ENCODE measurements at regions of chr9 and their contacts with region 1.

Region 1: GRCh38 chr9:129131300-129132145 is 20.3 kb downstream of the PTPA start:
- DNase-seq: peak; percentile 91
- H3K4me3 ChIP-seq: no peak overlapping the region
- H3K27ac ChIP-seq: no peak overlapping the region
- H3K4me1 ChIP-seq: peaks cover 0 to 11% of the 10 kb centered on the region in 2 experiments; a peak in 1 of 4 replicates
- H3K27me3 ChIP-seq: no peaks in the 10 kb centered on the region
- CTCF ChIP-seq: peak; percentile 97
- EP300 ChIP-seq: no peak
- RAD21 ChIP-seq: peak; percentile 85

Region 2: GRCh38 chr9:129110740-129111527 is 20.6 kb before region 1 on chr9 and contains the starts of genes CRAT and PTPA:
- CTCF ChIA-PET with region 1: interaction called, 52 read pairs
- POLR2A ChIA-PET with region 1: interaction called, 5 read pairs
- DNase-seq: peak; percentile 100
- H3K4me3 ChIP-seq: peak within 1 kb of the TSS; percentile 88 to 91
- H3K27ac ChIP-seq: peak within 1 kb of the TSS; percentile 97
- H3K4me1 ChIP-seq: peaks cover 11 to 19% of the 10 kb centered on the region in 2 experiments; a peak in 2 of 4 replicates
- H3K27me3 ChIP-seq: no peaks in the 10 kb centered on the region
- CTCF ChIP-seq: no peak
- EP300 ChIP-seq: 0 out of 4 replicates have a peak, but pooled peaks of 1 of the 2 experiments have one; percentile 17
- RAD21 ChIP-seq: no peak
- polyA plus RNA-seq, gene CRAT: 29.7 and 44.5 TPM in 2 replicates
- polyA plus RNA-seq, gene PTPA: 130 and 149 TPM in 2 replicates

Region 3: DNA sequence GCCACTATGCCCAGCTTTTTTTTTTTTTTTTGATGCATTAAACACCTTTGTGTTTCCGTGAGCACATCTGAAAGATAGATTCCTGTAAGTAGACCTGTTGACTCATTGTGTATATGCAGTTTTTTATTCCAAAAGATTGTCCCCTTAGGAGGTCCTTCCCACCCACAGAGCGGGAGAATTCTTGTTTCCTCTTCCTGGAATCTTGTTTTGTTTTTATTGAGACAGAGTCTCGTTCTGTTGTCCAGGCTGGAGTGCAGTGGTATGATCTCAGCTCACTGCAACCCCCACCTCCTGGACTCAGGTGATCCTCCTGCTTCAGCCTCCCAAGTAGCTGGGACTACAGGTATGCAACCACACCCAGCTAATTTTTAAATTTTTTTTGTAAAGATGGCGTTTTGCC is 12.7 kb before region 1 on chr9:
- CTCF ChIA-PET with region 1: interaction called, 52 read pairs
- POLR2A ChIA-PET with region 1: interaction called, 3 read pairs
- DNase-seq: no peak
- H3K4me3 ChIP-seq: no peak overlapping the region
- H3K27ac ChIP-seq: no peak overlapping the region
- H3K4me1 ChIP-seq: peaks cover 2 to 12% of the 10 kb centered on the region in 2 experiments; a peak in 3 of 4 replicates
- H3K27me3 ChIP-seq: no peaks in the 10 kb centered on the region
- CTCF ChIP-seq: no peak
- EP300 ChIP-seq: no peak
- RAD21 ChIP-seq: no peak

Region 4: DNA sequence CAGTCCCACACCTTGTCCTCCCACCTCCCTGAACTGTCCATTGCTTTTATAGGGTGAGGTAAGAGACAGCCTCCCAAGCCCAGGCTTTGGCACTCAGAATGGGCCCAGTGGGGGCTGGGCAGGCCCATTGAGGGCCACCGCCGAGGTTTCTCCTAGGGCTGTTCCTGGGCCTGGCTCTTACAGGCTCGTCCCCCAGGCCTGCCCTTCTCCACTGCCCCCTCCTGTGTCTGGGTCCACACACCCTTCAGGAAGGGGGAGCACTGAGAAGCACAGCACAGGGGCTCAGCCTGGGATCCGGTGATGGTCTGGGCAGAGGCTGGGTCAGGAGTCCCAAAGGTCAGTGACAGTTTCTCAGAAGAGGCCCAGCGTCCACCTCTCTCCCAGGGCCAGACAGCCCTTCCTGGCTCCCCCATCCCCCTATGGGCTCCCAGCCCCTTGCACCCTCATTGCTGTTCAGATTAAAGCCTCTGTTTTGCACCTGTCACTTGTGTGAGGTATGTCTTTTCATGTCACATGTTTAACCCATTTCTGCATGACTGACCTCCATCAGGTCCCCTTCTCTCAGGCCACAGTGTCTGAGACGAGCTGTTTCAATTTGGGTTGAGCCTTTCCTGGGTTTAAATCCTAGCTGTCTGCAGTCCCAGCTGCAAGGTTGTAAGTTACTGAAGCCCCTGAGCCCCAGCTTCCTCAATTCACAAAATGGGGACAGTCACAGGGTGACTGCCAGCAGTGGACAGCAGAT is 17.1 kb after region 1 on chr9:
- CTCF ChIA-PET with region 1: interaction called, 211 read pairs
- POLR2A ChIA-PET with region 1: no interaction called
- DNase-seq: no peak
- H3K4me3 ChIP-seq: no peak overlapping the region
- H3K27ac ChIP-seq: no peak overlapping the region
- H3K4me1 ChIP-seq: peaks cover 13 to 24% of the 10 kb centered on the region in 2 experiments; a peak in 3 of 4 replicates
- H3K27me3 ChIP-seq: no peaks in the 10 kb centered on the region
- CTCF ChIP-seq: no peak
- EP300 ChIP-seq: no peak
- RAD21 ChIP-seq: no peak

Region 5: GRCh38 chr9:129235931-129236331 is 104.4 kb after region 1 on chr9:
- CTCF ChIA-PET with region 1: no interaction called
- POLR2A ChIA-PET with region 1: no interaction called
- DNase-seq: no peak
- H3K4me3 ChIP-seq: no peak overlapping the region
- H3K27ac ChIP-seq: no peak overlapping the region
- H3K4me1 ChIP-seq: 0 out of 4 replicates have a peak, but pooled peaks cover 0 to 5% of the 10 kb centered on the region in 2 experiments
- H3K27me3 ChIP-seq: no peaks in the 10 kb centered on the region
- CTCF ChIP-seq: no peak
- EP300 ChIP-seq: no peak
- RAD21 ChIP-seq: no peak

Region 6: GRCh38 chr9:129626079-129626624 is 494.6 kb after region 1 on chr9 and contains the start of gene NTMT1:
- CTCF ChIA-PET with region 1: interaction called, 120 read pairs
- POLR2A ChIA-PET with region 1: interaction called, 3 read pairs
- DNase-seq: peak; percentile 95
- H3K4me3 ChIP-seq: peak within 1 kb of the TSS; percentile 87 to 92
- H3K27ac ChIP-seq: peak within 1 kb of the TSS; percentile 78 to 83
- H3K4me1 ChIP-seq: peaks cover 16 to 29% of the 10 kb centered on the region in 2 experiments; a peak in 2 of 4 replicates
- H3K27me3 ChIP-seq: no peaks in the 10 kb centered on the region
- CTCF ChIP-seq: no peak
- EP300 ChIP-seq: no peak
- RAD21 ChIP-seq: no peak
- polyA plus RNA-seq, gene NTMT1: 75.0 and 78.3 TPM in 2 replicates